ENCODE measurements at regions of chr6 and their contacts with region 1.

Region 1: DNA sequence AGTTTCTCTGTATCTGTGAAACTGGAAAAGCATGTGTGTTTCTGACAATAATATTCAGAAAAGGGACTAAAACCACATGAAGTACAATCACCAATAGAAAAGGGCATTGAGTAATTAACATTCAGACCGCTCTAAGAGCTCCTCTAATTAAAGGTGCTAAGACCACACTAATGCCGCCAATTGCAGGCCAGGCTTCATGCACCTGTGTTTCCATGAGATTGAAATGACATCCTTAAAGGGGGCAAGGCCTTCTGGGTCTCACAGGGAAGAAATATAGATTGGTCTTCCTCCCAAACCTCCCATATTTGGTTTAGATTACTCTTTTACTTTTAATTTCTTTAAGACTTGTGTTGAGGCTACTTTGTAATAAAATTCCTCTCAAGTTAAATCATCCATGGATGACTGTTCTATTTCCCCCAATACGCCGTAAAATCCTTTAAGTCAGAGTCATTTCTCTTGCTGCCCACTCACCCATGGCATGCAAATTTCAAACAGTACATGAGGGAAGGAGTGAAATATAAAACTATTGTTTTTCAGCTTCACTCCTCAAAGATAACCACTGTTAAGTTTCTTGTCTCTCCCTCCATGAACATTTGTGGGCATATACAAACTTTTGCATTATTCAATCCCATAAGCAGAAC is 110.6 kb downstream of the UBE3D start:
- DNase-seq: peak; percentile 91
- ATAC-seq: peak; percentile 40
- H3K4me3 ChIP-seq: no peak overlapping the region
- H3K27ac ChIP-seq: peak overlapping the region; percentile 98
- H3K4me1 ChIP-seq: peaks cover 32% of the 10 kb centered on the region
- H3K27me3 ChIP-seq: no peaks in the 10 kb centered on the region
- CTCF ChIP-seq: no peak
- POLR2A ChIP-seq: no peak
- RAD21 ChIP-seq: no peak

Region 2: GRCh38 chr6:82906951-82907350 is 48.1 kb before region 1 on chr6:
- CTCF ChIA-PET with region 1: no interaction called
- POLR2A ChIA-PET with region 1: no interaction called
- dilution Hi-C with region 1: no loop called
- in situ Hi-C with region 1: no loop called
- intact Hi-C with region 1: loop called (anchors 2 kb)
- DNase-seq: peak; percentile 61
- ATAC-seq: peak; percentile 72
- H3K4me3 ChIP-seq: no peak overlapping the region
- H3K27ac ChIP-seq: no peak overlapping the region
- H3K4me1 ChIP-seq: 0 out of 2 replicates have a peak, but pooled peaks cover 2% of the 10 kb centered on the region
- H3K27me3 ChIP-seq: no peaks in the 10 kb centered on the region
- CTCF ChIP-seq: no peak
- POLR2A ChIP-seq: no peak
- RAD21 ChIP-seq: no peak

Region 3: DNA sequence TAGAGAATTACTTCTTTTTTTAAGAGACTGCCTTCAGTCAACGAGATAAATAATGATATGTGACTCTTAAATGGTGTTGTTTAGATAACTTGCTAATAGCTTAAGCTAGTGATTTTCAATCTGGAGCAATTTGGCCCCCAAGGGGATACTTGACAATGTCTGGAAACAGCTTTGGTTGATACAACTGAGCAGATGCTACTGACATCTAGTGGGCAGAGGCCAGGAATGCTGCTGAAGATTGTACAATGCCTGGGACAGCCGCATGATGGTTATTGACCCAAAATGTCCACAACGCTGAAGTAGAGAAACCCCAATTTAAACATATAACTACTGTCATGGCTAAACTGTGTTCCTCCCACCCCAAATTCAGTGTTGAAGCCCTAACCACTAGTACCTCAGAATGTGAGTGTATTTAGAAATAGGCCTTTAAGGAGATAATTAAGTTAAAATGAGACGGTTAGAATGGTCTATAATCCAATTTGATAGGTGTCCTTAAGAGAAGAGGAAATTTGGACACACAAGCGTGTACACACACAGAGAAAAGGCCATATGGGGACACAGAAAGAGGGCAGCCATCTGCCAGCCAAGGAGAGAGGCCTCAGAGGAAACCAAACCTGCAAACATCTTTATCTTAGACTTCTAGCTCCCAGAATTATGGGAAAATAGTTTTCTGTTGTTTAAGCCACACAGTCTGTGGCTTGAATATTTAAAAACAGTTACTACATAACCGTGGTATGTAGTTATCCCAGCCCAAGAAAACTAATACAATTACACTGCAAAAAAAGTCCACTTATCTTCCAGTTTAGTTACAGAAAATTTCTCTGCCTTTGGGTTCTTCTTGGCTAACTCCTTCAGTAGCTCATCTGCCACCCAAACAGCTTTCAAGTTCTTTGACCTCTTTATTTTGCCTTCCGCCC is 260.3 kb after region 1 on chr6:
- CTCF ChIA-PET with region 1: no interaction called
- POLR2A ChIA-PET with region 1: no interaction called
- dilution Hi-C with region 1: no loop called
- in situ Hi-C with region 1: no loop called
- intact Hi-C with region 1: loop called (anchors 10 kb)
- DNase-seq: peak; percentile 80
- ATAC-seq: peak; percentile 91
- H3K4me3 ChIP-seq: no peak overlapping the region
- H3K27ac ChIP-seq: peak overlapping the region; percentile 62; the same call in 1 of the 2 replicates
- H3K4me1 ChIP-seq: peaks cover 4% of the 10 kb centered on the region
- H3K27me3 ChIP-seq: no peaks in the 10 kb centered on the region
- CTCF ChIP-seq: peak; percentile 92
- POLR2A ChIP-seq: no peak
- RAD21 ChIP-seq: peak; percentile 84

Region 4: GRCh38 chr6:84815896-84816735 is 1861.1 kb after region 1 on chr6:
- CTCF ChIA-PET with region 1: no interaction called
- POLR2A ChIA-PET with region 1: no interaction called
- dilution Hi-C with region 1: no loop called
- in situ Hi-C with region 1: no loop called
- intact Hi-C with region 1: no loop called
- DNase-seq: no peak
- ATAC-seq: no peak
- H3K4me3 ChIP-seq: no peak overlapping the region
- H3K27ac ChIP-seq: no peak overlapping the region
- H3K4me1 ChIP-seq: no peaks in the 10 kb centered on the region
- H3K27me3 ChIP-seq: no peaks in the 10 kb centered on the region
- CTCF ChIP-seq: no peak
- POLR2A ChIP-seq: no peak
- RAD21 ChIP-seq: no peak